ENCODE measurements at regions of chr3 and their contacts with region 1.

Region 1: GRCh38 chr3:56682462-56683121 is 473 bp downstream of the TASOR start:
- DNase-seq: peak; percentile 80
- H3K4me3 Mint-ChIP-seq: peak overlapping the region; percentile 98
- H3K27ac Mint-ChIP-seq: peak overlapping the region; percentile 96
- H3K4me1 Mint-ChIP-seq: peaks cover 39% of the 10 kb centered on the region
- H3K27me3 Mint-ChIP-seq: no peaks in the 10 kb centered on the region

Region 2: DNA sequence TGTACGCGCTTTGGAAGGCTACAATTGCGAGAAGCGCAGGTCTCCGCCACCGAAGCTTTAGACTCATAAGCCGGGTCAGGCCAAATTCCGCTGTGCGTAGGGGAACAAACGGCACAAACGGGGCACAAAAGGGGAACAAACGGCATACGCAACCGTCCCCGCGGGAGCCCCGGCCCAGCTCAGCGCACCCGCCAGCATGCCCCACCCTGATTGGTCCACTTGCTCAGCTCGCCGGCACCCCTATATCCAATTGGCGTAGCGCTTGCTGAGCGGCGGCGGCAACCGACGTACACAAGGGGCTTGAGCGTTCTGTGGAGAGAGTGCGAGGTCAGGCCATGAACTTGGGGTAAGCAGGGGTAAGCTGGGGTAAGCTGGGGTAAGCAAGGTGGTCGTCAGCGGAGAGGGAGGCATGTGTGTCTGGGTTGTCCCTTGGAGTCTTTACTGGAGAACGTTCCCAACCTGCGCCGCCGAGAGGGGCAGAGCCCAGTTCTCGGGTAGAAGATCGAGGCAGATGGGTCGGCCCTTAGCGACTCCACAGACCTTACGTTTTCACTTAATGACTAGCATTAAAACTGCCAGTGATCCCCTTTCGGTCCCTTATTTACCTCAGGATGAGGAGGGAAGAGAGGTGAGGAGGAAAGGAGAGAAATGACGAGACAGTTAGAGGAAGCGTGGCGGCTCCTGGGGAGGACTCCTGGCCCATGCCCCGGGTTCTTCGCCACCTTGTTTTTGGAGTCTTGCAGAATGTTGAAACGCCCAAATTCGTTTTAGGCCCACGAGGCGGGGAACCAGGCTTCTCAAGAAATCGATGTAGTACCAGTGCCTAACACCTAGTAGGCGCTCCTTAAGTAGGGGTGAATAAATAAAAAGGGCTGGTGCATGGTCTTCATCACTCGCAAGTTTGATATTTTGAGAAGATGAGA is 125.4 kb before region 1 on chr3 and contains the start of gene CCDC66:
- CTCF ChIA-PET with region 1: no interaction called
- intact Hi-C with region 1: loop called (anchors 1 kb)
- DNase-seq: peak; percentile 97
- H3K4me3 Mint-ChIP-seq: peak within 1 kb of the TSS; percentile 94
- H3K27ac Mint-ChIP-seq: peak within 1 kb of the TSS; percentile 97
- H3K4me1 Mint-ChIP-seq: peaks cover 26% of the 10 kb centered on the region
- H3K27me3 Mint-ChIP-seq: no peaks in the 10 kb centered on the region
- total RNA-seq, gene CCDC66: 29.0 to 29.3 TPM

Region 3: DNA sequence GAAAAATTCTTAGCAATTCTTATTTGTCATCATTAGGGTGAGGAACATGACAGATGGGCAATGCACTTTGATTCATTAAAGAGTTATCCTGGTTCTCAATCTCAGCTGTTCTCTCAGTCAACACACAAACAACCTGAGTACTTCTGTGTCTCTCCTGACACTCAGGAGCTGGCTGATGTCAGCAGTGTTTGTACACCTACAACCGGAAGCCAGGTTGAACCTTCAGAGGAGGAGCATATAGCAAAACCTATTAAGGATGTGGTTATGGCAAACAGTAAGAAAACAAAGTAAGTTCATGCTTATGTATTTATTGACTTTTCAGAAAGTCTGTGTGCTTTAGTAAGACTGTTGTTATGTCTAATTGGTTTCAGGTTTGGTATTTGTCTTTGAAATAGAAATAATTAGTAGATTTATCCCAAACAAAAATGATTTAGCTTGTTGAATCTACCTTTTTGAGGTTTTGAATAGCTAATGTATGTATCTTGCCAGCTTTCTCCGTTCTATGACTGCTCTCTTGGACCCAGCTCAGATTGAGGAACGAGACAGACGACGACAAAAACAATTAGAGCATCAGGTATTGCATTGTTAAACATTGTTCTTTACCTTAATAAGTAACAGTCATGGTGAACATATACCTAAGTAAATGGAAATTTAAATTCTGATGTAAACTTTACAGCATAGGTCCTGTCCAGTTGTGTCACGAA is 89.0 kb before region 1 on chr3:
- CTCF ChIA-PET with region 1: no interaction called
- intact Hi-C with region 1: loop called (anchors 1 kb)
- DNase-seq: peak; percentile 72
- H3K4me3 Mint-ChIP-seq: no peak overlapping the region
- H3K27ac Mint-ChIP-seq: peak overlapping the region; percentile 90
- H3K4me1 Mint-ChIP-seq: peaks cover 61% of the 10 kb centered on the region
- H3K27me3 Mint-ChIP-seq: no peaks in the 10 kb centered on the region

Region 4: DNA sequence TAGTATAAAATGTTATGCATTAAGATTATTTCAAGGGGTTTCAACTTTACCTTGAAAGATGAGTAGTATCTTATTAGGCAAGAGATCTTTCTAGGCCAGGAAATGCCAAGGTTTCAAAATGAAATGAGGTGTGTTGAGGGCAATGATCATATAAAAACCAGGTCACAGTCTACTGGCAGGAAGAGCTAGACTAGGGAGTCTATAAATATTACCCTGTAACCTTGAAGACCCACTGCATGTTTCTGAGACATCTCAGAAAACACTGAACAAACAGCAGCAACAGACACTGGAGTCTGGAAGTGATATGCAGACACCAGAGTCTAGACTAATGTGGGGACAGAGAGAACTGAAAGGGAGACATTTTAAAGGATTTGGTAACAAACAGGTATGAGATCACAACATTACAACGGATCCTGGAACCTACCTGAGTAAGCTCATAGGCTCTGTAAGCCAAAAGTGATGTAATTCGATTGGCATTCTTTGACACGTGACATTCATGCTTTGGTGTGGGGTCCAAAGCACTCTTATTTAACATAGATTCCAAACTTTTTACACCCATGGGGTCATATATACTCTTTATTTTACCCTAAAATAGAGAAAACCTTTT is 14.5 kb before region 1 on chr3:
- CTCF ChIA-PET with region 1: no interaction called
- intact Hi-C with region 1: no loop called
- DNase-seq: no peak
- H3K4me3 Mint-ChIP-seq: no peak overlapping the region
- H3K27ac Mint-ChIP-seq: peak overlapping the region; percentile 19
- H3K4me1 Mint-ChIP-seq: peaks cover 23% of the 10 kb centered on the region
- H3K27me3 Mint-ChIP-seq: no peaks in the 10 kb centered on the region

Region 5: GRCh38 chr3:56693750-56694149 is 11.2 kb after region 1 on chr3:
- CTCF ChIA-PET with region 1: no interaction called
- intact Hi-C with region 1: loop called (anchors 2 kb)
- DNase-seq: no peak
- H3K4me3 Mint-ChIP-seq: peak overlapping the region; percentile 26
- H3K27ac Mint-ChIP-seq: peak overlapping the region; percentile 19
- H3K4me1 Mint-ChIP-seq: peaks cover 40% of the 10 kb centered on the region
- H3K27me3 Mint-ChIP-seq: no peaks in the 10 kb centered on the region

Region 6: GRCh38 chr3:56737006-56737405 is 54.4 kb after region 1 on chr3:
- CTCF ChIA-PET with region 1: no interaction called
- intact Hi-C with region 1: no loop called
- DNase-seq: no peak
- H3K4me3 Mint-ChIP-seq: no peak overlapping the region
- H3K27ac Mint-ChIP-seq: no peak overlapping the region
- H3K4me1 Mint-ChIP-seq: peaks cover 38% of the 10 kb centered on the region
- H3K27me3 Mint-ChIP-seq: no peaks in the 10 kb centered on the region

Region 7: GRCh38 chr3:56783644-56784447 is 101.3 kb after region 1 on chr3:
- CTCF ChIA-PET with region 1: no interaction called
- intact Hi-C with region 1: loop called (anchors 1 kb)
- DNase-seq: peak; percentile 88
- H3K4me3 Mint-ChIP-seq: peak overlapping the region; percentile 70
- H3K27ac Mint-ChIP-seq: peak overlapping the region; percentile 98
- H3K4me1 Mint-ChIP-seq: peaks cover 95% of the 10 kb centered on the region
- H3K27me3 Mint-ChIP-seq: no peaks in the 10 kb centered on the region

Region 8: DNA sequence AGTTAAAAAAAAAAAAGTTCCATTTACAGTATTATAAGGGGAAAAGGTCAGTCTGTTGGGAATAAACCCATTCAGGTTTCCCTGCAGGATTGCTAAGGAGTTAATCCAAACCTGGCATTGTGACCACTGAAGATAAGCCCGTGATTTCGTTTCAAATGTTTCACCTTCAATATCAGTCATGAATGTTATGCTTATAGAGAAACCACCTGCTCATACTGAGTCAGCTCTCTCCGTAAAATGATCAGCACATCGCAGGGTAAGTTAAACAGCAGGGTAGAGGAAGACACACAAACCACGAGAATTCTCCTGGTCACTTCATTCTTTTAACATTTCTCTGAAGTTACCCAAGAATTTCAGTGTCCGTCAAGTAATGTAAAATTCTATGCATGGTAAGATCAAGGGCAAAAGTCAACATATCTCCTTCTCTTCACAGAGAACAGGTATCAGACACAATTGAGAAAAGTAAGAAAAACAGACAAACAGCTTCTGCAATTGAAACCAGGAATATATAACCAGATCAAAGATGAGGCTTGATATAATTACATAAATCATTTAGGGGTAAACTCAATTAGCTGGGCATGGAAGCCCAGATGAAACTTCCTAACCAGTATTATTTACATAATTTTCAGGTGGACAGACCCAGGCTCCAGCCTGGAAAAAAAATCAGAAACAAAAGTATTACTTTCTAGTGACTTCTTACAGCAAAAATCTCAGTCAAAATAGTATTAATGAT is 186.7 kb after region 1 on chr3:
- CTCF ChIA-PET with region 1: no interaction called
- intact Hi-C with region 1: no loop called
- DNase-seq: no peak
- H3K4me3 Mint-ChIP-seq: peak overlapping the region; percentile 63
- H3K27ac Mint-ChIP-seq: peak overlapping the region; percentile 54
- H3K4me1 Mint-ChIP-seq: peaks cover 65% of the 10 kb centered on the region
- H3K27me3 Mint-ChIP-seq: no peaks in the 10 kb centered on the region

Region 9: GRCh38 chr3:57555738-57556458 is 873.3 kb after region 1 on chr3 and contains the start of gene PDE12:
- CTCF ChIA-PET with region 1: no interaction called
- intact Hi-C with region 1: loop called (anchors 5 kb)
- DNase-seq: peak; percentile 89
- H3K4me3 Mint-ChIP-seq: peak within 1 kb of the TSS; percentile 98
- H3K27ac Mint-ChIP-seq: peak within 1 kb of the TSS; percentile 98
- H3K4me1 Mint-ChIP-seq: peaks cover 33% of the 10 kb centered on the region
- H3K27me3 Mint-ChIP-seq: no peaks in the 10 kb centered on the region
- total RNA-seq, gene PDE12: 15.3 to 15.6 TPM

Measured in activated naive CD4-positive, alpha-beta T cell treated with anti-CD3 and anti-CD28 coated beads for 36 hours (primary cell).